Activated CD4-positive, alpha-beta memory T cell treated with anti-CD3 and anti-CD28 coated beads for 36 hours (primary cell): ENCODE measurements at regions of chr20 and their contacts with region 1.

Region 1: DNA sequence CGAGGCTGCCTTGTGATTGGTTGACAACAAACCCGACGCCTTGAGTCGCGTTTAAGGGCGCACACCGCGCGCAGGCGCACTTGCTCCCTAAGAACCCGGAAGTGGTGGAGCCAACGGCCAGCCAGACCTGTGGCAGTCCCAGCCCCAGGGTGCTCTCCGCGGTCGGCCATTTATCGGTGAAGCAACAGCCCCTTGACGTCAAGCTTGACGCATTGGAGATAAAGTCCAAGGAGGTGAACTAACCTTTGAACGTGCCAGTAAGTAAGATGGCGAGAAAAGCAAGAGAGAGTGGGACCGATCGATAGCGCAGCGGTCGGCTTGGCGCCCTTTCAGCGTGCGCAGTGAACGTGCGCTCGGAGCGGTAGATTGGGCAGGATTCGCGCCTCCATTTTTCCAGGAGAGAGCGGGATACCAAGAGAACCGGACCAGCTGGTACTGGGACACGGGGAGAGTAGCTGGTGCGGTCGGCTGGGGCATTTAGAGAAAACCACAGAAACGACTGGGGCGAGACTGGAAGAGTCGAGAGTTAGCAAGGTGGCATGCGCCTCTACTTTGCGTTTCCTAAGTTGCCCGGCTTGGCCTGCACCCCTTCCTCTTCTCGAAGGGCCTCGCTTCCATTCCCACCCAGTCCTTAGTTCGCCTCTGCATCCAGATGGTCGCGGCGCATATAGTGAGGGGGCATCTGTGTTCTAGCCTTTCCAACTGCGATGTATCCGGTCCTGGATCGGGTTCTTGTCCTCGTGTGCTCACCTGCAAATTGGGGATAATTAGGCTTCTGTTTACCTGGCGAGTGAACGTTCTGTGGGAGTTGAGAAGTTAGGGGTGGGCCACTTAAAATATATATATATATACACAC is at the start of gene CSTF1:
- DNase-seq: peak; percentile 100
- H3K4me3 Mint-ChIP-seq: no peak within 1 kb of the TSS
- H3K27ac Mint-ChIP-seq: no peak within 1 kb of the TSS
- H3K4me1 Mint-ChIP-seq: peaks cover 36% of the 10 kb centered on the region
- H3K27me3 Mint-ChIP-seq: no peaks in the 10 kb centered on the region
- total RNA-seq, gene CSTF1: 53.9 to 56.6 TPM

Region 2: DNA sequence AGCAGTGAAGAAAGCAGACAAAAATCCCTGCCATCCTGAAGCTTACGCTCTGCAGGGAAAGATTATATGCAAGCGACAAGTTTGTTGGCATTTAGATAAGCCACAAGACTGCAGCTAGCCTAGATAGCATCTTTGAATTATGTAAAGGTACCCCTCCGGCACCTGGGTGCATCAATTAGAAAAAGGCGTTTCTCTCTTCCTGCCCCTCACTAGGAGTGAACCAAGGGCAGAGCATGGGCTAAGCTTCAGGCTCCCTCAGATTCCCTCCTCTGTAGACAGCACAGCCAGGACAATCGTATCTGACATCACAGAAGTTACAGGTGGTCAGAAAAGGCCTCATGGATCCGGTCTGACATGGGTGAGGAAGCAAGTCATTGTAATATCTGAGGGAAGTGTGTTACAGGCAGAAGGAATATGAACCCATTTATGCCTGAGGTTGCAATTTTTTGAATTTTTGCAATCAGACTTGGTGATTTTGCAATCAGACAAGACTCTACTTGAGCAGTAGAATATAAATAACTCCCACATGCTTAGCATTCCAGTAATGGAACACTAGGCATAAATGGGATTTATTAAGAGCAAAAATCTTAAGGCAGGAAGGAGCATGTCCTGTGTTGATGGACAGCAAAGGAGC is 439.4 kb before region 1 on chr20:
- CTCF ChIA-PET with region 1: no interaction called
- POLR2A ChIA-PET with region 1: no interaction called
- intact Hi-C with region 1: no loop called
- DNase-seq: no peak
- H3K4me3 Mint-ChIP-seq: no peak overlapping the region
- H3K27ac Mint-ChIP-seq: no peak overlapping the region
- H3K4me1 Mint-ChIP-seq: no peaks in the 10 kb centered on the region
- H3K27me3 Mint-ChIP-seq: no peaks in the 10 kb centered on the region

Region 3: GRCh38 chr20:56358596-56359211 is 33.8 kb before region 1 on chr20 and contains the start of gene FAM210B:
- CTCF ChIA-PET with region 1: interaction called, 5 read pairs
- POLR2A ChIA-PET with region 1: interaction called, 17 read pairs
- intact Hi-C with region 1: loop called (anchors 1 kb)
- DNase-seq: peak; percentile 88
- H3K4me3 Mint-ChIP-seq: peak within 1 kb of the TSS; percentile 83
- H3K27ac Mint-ChIP-seq: no peak within 1 kb of the TSS
- H3K4me1 Mint-ChIP-seq: peaks cover 14% of the 10 kb centered on the region
- H3K27me3 Mint-ChIP-seq: no peaks in the 10 kb centered on the region
- total RNA-seq, gene FAM210B: 5.5 to 5.9 TPM

Region 4: DNA sequence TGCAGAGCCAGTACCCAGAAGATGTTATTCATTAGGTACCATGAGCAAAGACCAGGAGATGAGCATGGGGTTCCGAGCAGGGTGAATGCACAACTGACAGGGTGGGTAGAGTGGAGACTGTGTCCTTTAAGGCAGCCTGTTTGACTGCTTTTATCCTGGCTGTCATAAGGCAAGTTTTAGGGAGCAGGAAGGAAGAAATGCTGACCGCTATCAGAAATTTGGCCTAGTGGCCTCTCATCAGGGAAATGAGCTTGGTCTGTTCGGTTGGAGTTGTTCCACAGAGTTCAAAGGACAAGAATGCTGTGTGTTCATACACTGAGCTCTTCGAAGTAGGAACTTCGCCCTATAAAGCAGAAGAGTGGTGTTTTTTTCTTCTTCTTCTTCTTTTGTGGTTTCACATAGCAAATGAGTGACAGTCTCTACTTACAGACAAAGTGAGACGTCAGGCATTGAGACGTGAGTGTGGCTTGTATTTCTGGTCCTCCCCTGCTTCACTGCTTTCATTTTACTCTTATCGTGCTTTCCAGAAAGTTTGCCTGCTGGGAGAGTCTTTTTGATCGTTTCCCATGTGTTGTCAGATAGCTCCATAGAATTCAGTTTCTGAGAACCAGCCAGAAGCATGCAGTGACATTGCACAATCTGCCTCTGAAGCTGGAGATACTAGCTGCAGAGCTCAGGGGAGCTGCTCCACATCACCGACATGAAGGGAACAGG is 19.4 kb after region 1 on chr20 and contains the start of gene CASS4:
- CTCF ChIA-PET with region 1: interaction called, 10 read pairs
- POLR2A ChIA-PET with region 1: interaction called, 27 read pairs
- intact Hi-C with region 1: loop called (anchors 1 kb)
- DNase-seq: peak; percentile 63
- H3K4me3 Mint-ChIP-seq: peak within 1 kb of the TSS; percentile 83
- H3K27ac Mint-ChIP-seq: peak within 1 kb of the TSS; percentile 91
- H3K4me1 Mint-ChIP-seq: peaks cover 59% of the 10 kb centered on the region
- H3K27me3 Mint-ChIP-seq: no peaks in the 10 kb centered on the region
- total RNA-seq, gene CASS4: 7.8 to 8.6 TPM

Region 5: GRCh38 chr20:56468316-56469082 is 76.0 kb after region 1 on chr20 and contains the start of gene RTF2:
- CTCF ChIA-PET with region 1: interaction called, 11 read pairs
- POLR2A ChIA-PET with region 1: interaction called, 14 read pairs
- intact Hi-C with region 1: loop called (anchors 1 kb)
- DNase-seq: peak; percentile 98
- H3K4me3 Mint-ChIP-seq: peak within 1 kb of the TSS; percentile 100
- H3K27ac Mint-ChIP-seq: peak within 1 kb of the TSS; percentile 99
- H3K4me1 Mint-ChIP-seq: peaks cover 35% of the 10 kb centered on the region
- H3K27me3 Mint-ChIP-seq: no peaks in the 10 kb centered on the region
- total RNA-seq, gene RTF2: 81.8 to 83.1 TPM

Region 6: DNA sequence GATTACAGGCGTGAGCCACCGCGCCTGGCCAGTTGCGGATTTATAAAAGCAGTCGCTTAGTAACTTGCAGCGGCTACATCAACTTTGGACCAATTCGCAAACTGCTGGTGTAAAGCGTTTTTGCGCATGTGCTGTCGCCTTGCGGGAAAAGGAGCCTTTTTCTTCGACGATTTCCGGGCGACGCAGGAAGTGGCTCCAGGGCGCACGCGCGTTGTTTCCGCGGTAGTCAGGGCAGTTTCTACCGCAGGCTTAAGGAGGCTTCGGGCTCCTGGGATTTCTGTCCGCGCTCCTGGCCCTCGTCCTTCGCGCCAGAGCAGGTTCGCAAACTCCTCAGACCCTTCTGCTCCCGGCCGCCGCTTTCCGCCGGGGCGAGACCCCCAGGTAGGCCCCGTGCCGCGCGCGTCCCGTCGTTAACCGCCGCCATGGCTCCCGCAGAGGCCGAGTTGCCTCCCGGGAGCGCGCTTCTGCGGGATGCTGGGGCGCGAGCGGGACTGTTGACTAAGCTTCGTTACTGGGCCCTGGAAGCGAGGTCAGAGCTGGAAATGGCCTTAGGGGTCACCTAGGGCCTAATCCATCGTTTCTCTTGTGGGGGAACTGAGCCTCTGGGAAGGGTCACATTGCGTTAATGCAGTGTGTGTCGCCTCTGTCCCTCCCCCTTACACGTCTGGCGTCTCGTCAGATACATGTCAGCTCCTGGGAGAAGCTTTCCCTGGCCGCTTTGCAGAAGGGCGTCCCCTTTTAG is 958.7 kb after region 1 on chr20 and contains the start of gene RAE1:
- CTCF ChIA-PET with region 1: no interaction called
- POLR2A ChIA-PET with region 1: no interaction called
- intact Hi-C with region 1: loop called (anchors 2 kb)
- DNase-seq: peak; percentile 95
- H3K4me3 Mint-ChIP-seq: peak within 1 kb of the TSS; percentile 90
- H3K27ac Mint-ChIP-seq: peak within 1 kb of the TSS; percentile 85
- H3K4me1 Mint-ChIP-seq: peaks cover 23% of the 10 kb centered on the region
- H3K27me3 Mint-ChIP-seq: no peaks in the 10 kb centered on the region
- total RNA-seq, gene RAE1: 33.7 to 38.2 TPM